PC-3 (cell line): ENCODE measurements at regions of chr3 and their contacts with region 1.

Region 1: DNA sequence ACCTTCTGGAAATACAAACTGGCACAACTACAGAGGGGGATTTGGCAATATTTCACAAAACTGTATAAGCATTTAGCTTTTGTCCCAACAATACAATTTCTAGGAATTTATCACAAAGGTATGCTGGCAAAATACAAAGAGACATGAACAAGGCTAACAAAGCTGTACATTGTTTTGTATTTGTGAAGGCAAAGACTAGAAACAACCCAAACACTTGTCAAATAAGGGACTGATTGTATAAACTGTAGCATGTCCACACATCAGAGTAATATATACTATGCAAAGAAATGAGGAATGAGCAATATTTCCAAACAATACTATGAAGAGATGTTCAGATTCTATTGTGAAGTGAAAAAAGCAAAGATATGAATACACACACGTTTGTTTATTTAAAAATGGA is 26.4 kb downstream of the CP start:
- DNase-seq: no peak
- ATAC-seq: no peak
- H3K4me3 ChIP-seq: no peak overlapping the region
- H3K27ac ChIP-seq: no peak overlapping the region
- H3K4me1 ChIP-seq: peaks cover 4% of the 10 kb centered on the region
- H3K27me3 ChIP-seq: no peaks in the 10 kb centered on the region
- CTCF ChIP-seq: no peak

Region 2: GRCh38 chr3:148847351-148847750 is 347.9 kb before region 1 on chr3:
- CTCF ChIA-PET with region 1: no interaction called
- POLR2A ChIA-PET with region 1: interaction called, 14 read pairs
- intact Hi-C with region 1: no loop called
- DNase-seq: no peak
- ATAC-seq: no peak
- H3K4me3 ChIP-seq: no peak overlapping the region
- H3K27ac ChIP-seq: no peak overlapping the region
- H3K4me1 ChIP-seq: no peaks in the 10 kb centered on the region
- H3K27me3 ChIP-seq: peaks cover 10% of the 10 kb centered on the region
- CTCF ChIP-seq: no peak